CD4-positive, alpha-beta T cell (primary cell): ENCODE measurements at regions of chr13 and their contacts with region 1.

Region 1: GRCh38 chr13:97432917-97433726 is 847 bp upstream of the RAP2A start:
- DNase-seq: peak; percentile 93 to 100 (median 98)
- ATAC-seq: peak; percentile 78
- H3K4me3 ChIP-seq: peak overlapping the region; percentile 97
- H3K4me3 Mint-ChIP-seq: peak overlapping the region; percentile 99
- H3K27ac ChIP-seq: peak overlapping the region; percentile 99 to 100
- H3K27ac Mint-ChIP-seq: peak overlapping the region; percentile 99
- H3K4me1 ChIP-seq: peaks cover 13% of the 10 kb centered on the region
- H3K4me1 Mint-ChIP-seq: peaks cover 27% of the 10 kb centered on the region
- H3K27me3 ChIP-seq: no peaks in the 10 kb centered on the region
- H3K27me3 Mint-ChIP-seq: no peaks in the 10 kb centered on the region
- CTCF ChIP-seq: no peak

Region 2: DNA sequence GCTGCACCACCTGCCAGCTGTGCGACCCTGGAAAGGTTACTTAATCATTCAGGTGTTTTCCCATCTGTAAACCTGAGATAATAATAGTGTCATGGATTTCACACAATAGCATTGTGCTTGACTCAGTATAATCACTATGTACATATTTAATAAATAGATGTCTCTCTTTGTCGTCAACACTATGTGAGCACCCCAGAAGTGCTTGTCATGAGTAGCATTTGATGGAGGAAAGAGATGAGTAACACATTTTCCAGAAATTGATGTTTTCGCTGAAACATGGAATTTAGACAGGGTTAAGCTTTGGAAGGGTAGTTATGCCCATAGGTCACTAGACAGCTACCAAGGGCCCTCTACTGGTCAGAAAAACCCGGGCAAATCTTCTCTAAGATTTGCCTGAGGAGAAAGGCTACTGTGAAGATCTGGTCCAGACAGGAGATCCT is 220.5 kb before region 1 on chr13:
- CTCF ChIA-PET with region 1: no interaction called
- POLR2A ChIA-PET with region 1: interaction called, 15 read pairs
- intact Hi-C with region 1: no loop called
- DNase-seq: no peak
- ATAC-seq: no peak
- H3K4me3 ChIP-seq: no peak overlapping the region
- H3K4me3 Mint-ChIP-seq: no peak overlapping the region
- H3K27ac ChIP-seq: no peak overlapping the region
- H3K27ac Mint-ChIP-seq: no peak overlapping the region
- H3K4me1 ChIP-seq: peaks cover 23% of the 10 kb centered on the region
- H3K4me1 Mint-ChIP-seq: peaks cover 79% of the 10 kb centered on the region
- H3K27me3 ChIP-seq: no peaks in the 10 kb centered on the region
- H3K27me3 Mint-ChIP-seq: no peaks in the 10 kb centered on the region
- CTCF ChIP-seq: no peak

Region 3: GRCh38 chr13:97359181-97360057 is 73.7 kb before region 1 on chr13:
- CTCF ChIA-PET with region 1: interaction called, 3 read pairs
- POLR2A ChIA-PET with region 1: interaction called, 11 read pairs
- intact Hi-C with region 1: no loop called
- DNase-seq: peak in 13 of 14 experiments; percentile 13 to 80 (median 26)
- ATAC-seq: peak; percentile 98
- H3K4me3 ChIP-seq: no peak overlapping the region
- H3K4me3 Mint-ChIP-seq: no peak overlapping the region
- H3K27ac ChIP-seq: no peak overlapping the region
- H3K27ac Mint-ChIP-seq: peak overlapping the region; percentile 10
- H3K4me1 ChIP-seq: no peaks in the 10 kb centered on the region
- H3K4me1 Mint-ChIP-seq: peaks cover 5% of the 10 kb centered on the region
- H3K27me3 ChIP-seq: no peaks in the 10 kb centered on the region
- H3K27me3 Mint-ChIP-seq: no peaks in the 10 kb centered on the region
- CTCF ChIP-seq: peak; percentile 83

Region 4: GRCh38 chr13:97403893-97404750 is 29.0 kb before region 1 on chr13:
- CTCF ChIA-PET with region 1: no interaction called
- POLR2A ChIA-PET with region 1: interaction called, 11 read pairs
- intact Hi-C with region 1: no loop called
- DNase-seq: no peak
- ATAC-seq: no peak
- H3K4me3 ChIP-seq: no peak overlapping the region
- H3K4me3 Mint-ChIP-seq: no peak overlapping the region
- H3K27ac ChIP-seq: no peak overlapping the region
- H3K27ac Mint-ChIP-seq: no peak overlapping the region
- H3K4me1 ChIP-seq: no peaks in the 10 kb centered on the region
- H3K4me1 Mint-ChIP-seq: no peaks in the 10 kb centered on the region
- H3K27me3 ChIP-seq: no peaks in the 10 kb centered on the region
- H3K27me3 Mint-ChIP-seq: peaks cover 13% of the 10 kb centered on the region
- CTCF ChIP-seq: no peak

Region 5: GRCh38 chr13:97975848-97976609 is 542.9 kb after region 1 on chr13:
- CTCF ChIA-PET with region 1: no interaction called
- POLR2A ChIA-PET with region 1: interaction called, 8 read pairs
- intact Hi-C with region 1: loop called (anchors 1 to 2 kb)
- DNase-seq: peak; percentile 16 to 97 (median 88)
- ATAC-seq: peak; percentile 89
- H3K4me3 ChIP-seq: peak overlapping the region; percentile 91
- H3K4me3 Mint-ChIP-seq: peak overlapping the region; percentile 96
- H3K27ac ChIP-seq: peak overlapping the region; percentile 75 to 82
- H3K27ac Mint-ChIP-seq: peak overlapping the region; percentile 92
- H3K4me1 ChIP-seq: peaks cover 15% of the 10 kb centered on the region
- H3K4me1 Mint-ChIP-seq: peaks cover 48% of the 10 kb centered on the region
- H3K27me3 ChIP-seq: no peaks in the 10 kb centered on the region
- H3K27me3 Mint-ChIP-seq: no peaks in the 10 kb centered on the region
- CTCF ChIP-seq: no peak

Region 6: GRCh38 chr13:98365302-98365701 is 932.2 kb after region 1 on chr13:
- CTCF ChIA-PET with region 1: no interaction called
- POLR2A ChIA-PET with region 1: no interaction called
- intact Hi-C with region 1: no loop called
- DNase-seq: no peak
- ATAC-seq: no peak
- H3K4me3 ChIP-seq: no peak overlapping the region
- H3K4me3 Mint-ChIP-seq: no peak overlapping the region
- H3K27ac ChIP-seq: no peak overlapping the region
- H3K27ac Mint-ChIP-seq: no peak overlapping the region
- H3K4me1 ChIP-seq: no peaks in the 10 kb centered on the region
- H3K4me1 Mint-ChIP-seq: no peaks in the 10 kb centered on the region
- H3K27me3 ChIP-seq: no peaks in the 10 kb centered on the region
- H3K27me3 Mint-ChIP-seq: peaks cover 26% of the 10 kb centered on the region
- CTCF ChIP-seq: no peak